Activated T-helper 2 cell treated with anti-CD3 and anti-CD28 coated beads, Interferon-gamma antibody, Interleukin-2, Interleukin-4, amounts not matched to agents 10 μg/mL and 5 μg/mL and 100 μg/mL, durations not matched to agents 14 hours and 24 hours and 36 hours (primary cell): ENCODE measurements at regions of chr11 and their contacts with region 1.

Region 1: DNA sequence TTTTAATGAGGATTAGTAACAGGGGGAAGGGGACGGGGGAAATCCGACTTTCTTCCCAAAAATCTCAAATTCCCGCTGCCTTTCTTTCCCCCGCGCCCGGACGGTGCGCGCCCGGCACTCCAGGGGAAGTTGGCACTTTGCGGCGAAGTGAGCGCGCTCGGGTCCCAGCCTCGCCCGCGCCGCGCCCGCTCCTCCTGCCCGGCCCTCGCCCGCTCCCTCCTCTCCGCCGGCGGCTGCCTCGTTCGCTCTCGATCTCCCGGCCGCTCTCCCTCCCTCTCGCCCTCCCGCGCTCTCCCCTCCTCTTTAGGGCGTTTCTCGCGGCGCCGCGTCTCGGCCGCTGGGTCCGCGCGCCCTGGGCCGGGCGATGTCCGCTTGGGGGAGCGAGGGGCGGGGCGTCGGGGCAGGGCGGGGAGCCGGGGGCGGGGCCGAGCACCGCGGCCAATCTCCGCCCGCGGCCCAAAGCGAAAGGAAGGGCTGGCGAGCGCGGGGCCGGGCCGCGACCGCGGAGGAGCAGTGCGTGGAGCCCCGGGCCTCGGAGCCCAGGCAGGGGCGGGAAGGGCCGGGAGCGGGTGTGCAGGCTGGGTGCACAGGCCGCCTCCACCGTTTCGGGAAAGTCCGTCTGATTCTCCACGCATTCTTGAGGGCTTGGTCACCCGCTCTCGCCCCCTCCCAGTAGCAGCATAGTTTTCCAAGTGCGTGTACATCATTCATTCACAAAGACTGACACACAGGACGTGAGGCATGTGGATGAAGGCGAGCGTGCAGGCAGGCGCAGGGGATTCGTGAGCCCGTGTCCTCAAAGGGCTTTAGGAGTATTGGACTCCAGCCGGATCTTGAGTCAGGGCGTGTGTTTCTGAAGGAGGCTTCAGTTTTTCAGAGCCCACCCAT is 65.1 kb downstream of the ETS1 start:
- DNase-seq: peak; percentile 90
- H3K4me3 Mint-ChIP-seq: peak overlapping the region; percentile 97
- H3K27ac Mint-ChIP-seq: peak overlapping the region; percentile 97
- H3K4me1 Mint-ChIP-seq: peaks cover 51% of the 10 kb centered on the region
- H3K27me3 Mint-ChIP-seq: no peaks in the 10 kb centered on the region

Region 2: DNA sequence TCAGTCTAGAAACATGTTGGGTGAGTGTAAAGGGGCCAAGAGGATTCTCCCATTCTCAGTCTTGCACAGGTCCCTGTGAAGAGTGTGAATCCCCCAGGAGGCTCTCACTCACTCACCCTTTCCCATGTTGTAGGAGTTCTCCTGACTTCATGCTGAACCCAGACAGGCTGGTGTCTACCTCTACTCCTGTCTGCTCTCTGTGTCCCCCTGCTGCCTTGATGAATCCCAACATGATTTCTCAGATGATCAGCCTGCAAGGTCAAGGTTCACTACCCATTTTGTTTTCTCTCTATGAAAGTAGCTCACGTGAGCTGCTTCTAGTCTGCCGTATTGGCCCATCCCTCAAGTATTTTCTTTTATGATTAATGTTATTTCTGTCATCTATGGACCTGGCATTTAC is 435.5 kb before region 1 on chr11:
- intact Hi-C with region 1: no loop called
- DNase-seq: no peak
- H3K4me3 Mint-ChIP-seq: no peak overlapping the region
- H3K27ac Mint-ChIP-seq: no peak overlapping the region
- H3K4me1 Mint-ChIP-seq: peaks cover 7% of the 10 kb centered on the region
- H3K27me3 Mint-ChIP-seq: peaks cover 2% of the 10 kb centered on the region

Region 3: DNA sequence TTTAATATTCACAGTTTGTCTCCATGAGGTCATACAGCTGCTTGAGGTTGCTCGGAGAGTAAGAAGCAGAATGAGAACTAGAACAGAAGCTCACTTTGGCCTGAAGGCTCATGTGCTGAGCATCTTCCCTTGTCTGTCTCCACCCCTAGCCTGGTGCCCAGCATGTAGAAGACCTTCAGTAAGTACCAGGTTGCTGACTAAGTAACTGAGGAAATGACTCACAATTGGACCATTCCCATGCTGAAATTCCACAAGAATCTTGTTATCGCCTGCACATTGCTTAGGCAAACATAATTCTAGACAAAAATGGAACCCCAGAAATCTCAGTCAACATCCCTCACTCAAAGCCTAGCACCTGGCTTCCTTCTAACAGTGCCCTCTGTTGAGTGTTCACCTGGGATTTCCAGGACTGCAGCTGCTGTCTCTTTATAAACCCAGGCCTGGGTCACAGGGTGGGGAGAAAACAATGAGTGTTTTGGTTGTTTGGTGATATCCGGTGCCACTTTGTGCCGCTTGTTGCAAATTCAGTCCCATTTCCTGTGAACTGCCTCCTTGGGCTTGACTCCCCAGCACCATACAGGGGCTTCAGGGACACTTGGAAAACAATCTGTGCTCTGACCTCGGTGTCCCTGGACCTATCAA is 341.7 kb before region 1 on chr11:
- intact Hi-C with region 1: loop called (anchors 5 kb)
- DNase-seq: no peak
- H3K4me3 Mint-ChIP-seq: no peak overlapping the region
- H3K27ac Mint-ChIP-seq: peak overlapping the region; percentile 44
- H3K4me1 Mint-ChIP-seq: peaks cover 61% of the 10 kb centered on the region
- H3K27me3 Mint-ChIP-seq: no peaks in the 10 kb centered on the region

Region 4: DNA sequence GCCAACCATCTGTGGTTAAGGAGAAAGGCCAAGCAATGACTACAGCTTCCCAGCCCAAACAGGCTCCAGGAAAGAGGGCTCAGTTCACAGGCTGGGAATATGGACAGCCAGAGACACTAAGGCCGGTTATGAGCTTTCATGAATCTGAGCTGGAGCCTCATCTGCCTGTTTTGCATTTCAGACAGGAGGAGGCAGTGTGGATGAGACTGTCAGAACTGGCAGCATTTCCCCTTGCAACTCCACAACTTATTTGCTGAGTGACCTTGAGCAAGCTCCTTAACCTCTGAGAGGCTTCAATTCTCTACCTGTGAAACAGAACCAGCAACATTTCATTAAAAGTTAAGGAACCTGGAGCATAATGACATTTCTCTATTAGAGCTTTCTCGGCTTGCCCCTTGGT is 198.9 kb before region 1 on chr11:
- intact Hi-C with region 1: loop called (anchors 2 kb)
- DNase-seq: peak; percentile 44
- H3K4me3 Mint-ChIP-seq: peak overlapping the region; percentile 62
- H3K27ac Mint-ChIP-seq: peak overlapping the region; percentile 94
- H3K4me1 Mint-ChIP-seq: peaks cover 81% of the 10 kb centered on the region
- H3K27me3 Mint-ChIP-seq: no peaks in the 10 kb centered on the region

Region 5: GRCh38 chr11:128506999-128507611 is 15.2 kb before region 1 on chr11:
- intact Hi-C with region 1: loop called (anchors 1 kb)
- DNase-seq: no peak
- H3K4me3 Mint-ChIP-seq: peak overlapping the region; percentile 79
- H3K27ac Mint-ChIP-seq: peak overlapping the region; percentile 96
- H3K4me1 Mint-ChIP-seq: peaks cover 96% of the 10 kb centered on the region
- H3K27me3 Mint-ChIP-seq: no peaks in the 10 kb centered on the region

Region 6: GRCh38 chr11:128599729-128600128 is 77.4 kb after region 1 on chr11:
- intact Hi-C with region 1: loop called (anchors 1 kb)
- DNase-seq: no peak
- H3K4me3 Mint-ChIP-seq: no peak overlapping the region
- H3K27ac Mint-ChIP-seq: peak overlapping the region; percentile 62
- H3K4me1 Mint-ChIP-seq: peaks cover 36% of the 10 kb centered on the region
- H3K27me3 Mint-ChIP-seq: peaks cover 2% of the 10 kb centered on the region

Region 7: GRCh38 chr11:128757235-128757711 is 235.0 kb after region 1 on chr11:
- intact Hi-C with region 1: loop called (anchors 5 kb)
- DNase-seq: peak; percentile 53
- H3K4me3 Mint-ChIP-seq: peak overlapping the region; percentile 45
- H3K27ac Mint-ChIP-seq: peak overlapping the region; percentile 90
- H3K4me1 Mint-ChIP-seq: peaks cover 55% of the 10 kb centered on the region
- H3K27me3 Mint-ChIP-seq: no peaks in the 10 kb centered on the region